Dorsolateral prefrontal cortex (tissue), 120 donors: ENCODE measurements at regions of chr7 and their contacts with region 1.

Region 1: DNA sequence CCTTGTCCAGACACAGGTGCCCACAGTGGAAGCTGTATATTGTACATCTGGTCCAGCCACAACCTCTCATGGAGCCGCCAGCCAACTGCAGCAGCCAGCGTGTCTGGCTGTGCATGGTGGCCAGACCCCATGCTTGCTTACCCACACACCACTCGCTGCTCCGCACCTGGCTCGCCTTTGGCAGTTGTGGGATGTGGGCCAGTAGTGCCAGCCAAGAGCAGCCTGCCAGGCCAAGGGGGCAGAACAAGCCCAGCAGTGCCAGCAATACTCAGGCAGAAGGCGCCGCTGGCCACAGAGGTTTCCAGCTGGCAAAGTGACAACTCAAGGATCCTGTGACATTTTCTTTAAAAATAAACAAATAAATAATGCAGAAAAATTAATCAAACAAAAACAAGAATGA is 11.7 kb upstream of the TMEM243 start:
- DNase-seq: peak in 7 of 10 donors; percentile 14 to 70 (median 47)
- H3K4me3 ChIP-seq: no peak overlapping the region
- H3K27ac ChIP-seq: peak overlapping the region in 5 of 59 donors; percentile 4 to 69 (median 48)
- H3K27me3 ChIP-seq: no peaks in the 10 kb centered on the region
- CTCF ChIP-seq: no peak

Region 2: GRCh38 chr7:86916277-86916825 is 314.9 kb before region 1 on chr7:
- intact Hi-C with region 1: loop called in 1 of 2 experiments (anchors 5 kb)
- DNase-seq: no peak
- H3K4me3 ChIP-seq: no peak overlapping the region
- H3K27ac ChIP-seq: no peak overlapping the region
- H3K27me3 ChIP-seq: no peaks in the 10 kb centered on the region
- CTCF ChIP-seq: no peak

Region 3: GRCh38 chr7:86926732-86927131 is 304.5 kb before region 1 on chr7:
- intact Hi-C with region 1: loop called in 1 of 2 experiments (anchors 5 kb)
- DNase-seq: peak in 3 of 10 donors; percentile 5 to 53 (median 34)
- H3K4me3 ChIP-seq: no peak overlapping the region
- H3K27ac ChIP-seq: peak overlapping the region in 8 of 59 donors; percentile 16 to 43 (median 30)
- H3K27me3 ChIP-seq: no peaks in the 10 kb centered on the region
- CTCF ChIP-seq: peak; percentile 60 to 93 (median 76)

Region 4: GRCh38 chr7:87252166-87252565 is 20.9 kb after region 1 on chr7:
- intact Hi-C with region 1: no loop called
- DNase-seq: no peak
- H3K4me3 ChIP-seq: no peak overlapping the region
- H3K27ac ChIP-seq: no peak overlapping the region
- H3K27me3 ChIP-seq: no peaks in the 10 kb centered on the region
- CTCF ChIP-seq: no peak

Region 5: GRCh38 chr7:87369216-87369615 is 138.0 kb after region 1 on chr7:
- intact Hi-C with region 1: no loop called
- DNase-seq: no peak
- H3K4me3 ChIP-seq: no peak overlapping the region
- H3K27ac ChIP-seq: no peak overlapping the region
- H3K27me3 ChIP-seq: no peaks in the 10 kb centered on the region
- CTCF ChIP-seq: no peak